ENCODE measurements at regions of chr3 and their contacts with region 1.

Region 1: DNA sequence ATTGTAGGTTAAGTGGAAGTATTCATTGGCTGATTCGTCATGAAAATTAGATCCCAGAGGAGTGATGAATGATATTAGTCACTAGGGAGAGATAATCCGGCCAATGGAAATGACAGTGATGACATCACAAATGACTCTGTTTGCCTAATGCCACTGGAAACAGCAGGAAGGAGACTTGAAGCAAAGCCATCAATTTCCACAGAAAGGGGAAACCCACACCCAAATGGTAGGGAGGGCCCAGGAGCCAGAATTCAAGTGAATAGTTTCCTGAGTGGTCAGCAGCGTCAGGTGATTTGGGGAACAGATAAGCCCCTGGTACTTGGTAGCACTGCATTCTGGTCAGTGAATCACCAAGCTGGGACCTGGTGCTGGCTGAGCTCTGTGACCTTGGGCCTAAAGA is 3.3 kb upstream of the ADAMTS9 start:
- DNase-seq: peak in 2 of 3 donors; percentile 39 to 44
- ATAC-seq: peak in 1 of 2 donors; percentile 64
- H3K4me3 ChIP-seq: no peak overlapping the region
- H3K27ac ChIP-seq: no peak overlapping the region
- H3K4me1 ChIP-seq: peaks cover 8% of the 10 kb centered on the region
- H3K27me3 ChIP-seq: no peaks in the 10 kb centered on the region

Region 2: GRCh38 chr3:64606191-64606590 is 84.9 kb before region 1 on chr3:
- intact Hi-C with region 1: no loop called
- DNase-seq: no peak
- ATAC-seq: no peak
- H3K4me3 ChIP-seq: no peak overlapping the region
- H3K27ac ChIP-seq: no peak overlapping the region
- H3K4me1 ChIP-seq: no peaks in the 10 kb centered on the region
- H3K27me3 ChIP-seq: no peaks in the 10 kb centered on the region

Region 3: GRCh38 chr3:64890006-64890405 is 199.0 kb after region 1 on chr3:
- intact Hi-C with region 1: loop called in 1 of 4 experiments (anchors 10 kb)
- DNase-seq: peak; percentile 74 to 80 (median 76)
- ATAC-seq: peak; percentile 56 to 91
- H3K4me3 ChIP-seq: no peak overlapping the region
- H3K27ac ChIP-seq: no peak overlapping the region
- H3K4me1 ChIP-seq: peaks cover 3% of the 10 kb centered on the region
- H3K27me3 ChIP-seq: no peaks in the 10 kb centered on the region

Region 4: DNA sequence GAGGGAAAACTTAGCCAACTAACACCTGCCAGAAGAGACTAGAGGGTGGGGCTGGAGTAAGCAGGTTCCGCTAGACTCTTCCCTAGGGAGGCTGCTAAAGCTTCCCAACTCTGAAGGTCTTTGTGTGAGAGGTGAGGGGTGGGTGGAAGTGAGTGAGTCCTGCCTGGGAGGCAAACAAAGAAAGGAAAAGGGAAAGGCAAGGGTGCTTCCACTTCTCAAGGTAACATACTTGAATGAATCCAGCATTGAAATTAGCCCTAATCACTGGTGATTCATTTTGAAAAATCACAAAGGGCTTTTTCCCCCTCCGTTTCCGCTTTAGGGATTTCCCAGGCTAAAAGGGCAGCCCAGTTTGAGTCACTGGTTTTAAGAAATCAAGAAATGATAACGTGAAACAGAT is 217.2 kb after region 1 on chr3:
- intact Hi-C with region 1: loop called in 2 of 4 experiments (anchors 10 kb)
- DNase-seq: peak in 1 of 3 donors; percentile 22
- ATAC-seq: peak; percentile 56 to 95
- H3K4me3 ChIP-seq: no peak overlapping the region
- H3K27ac ChIP-seq: no peak overlapping the region
- H3K4me1 ChIP-seq: peaks cover 12% of the 10 kb centered on the region
- H3K27me3 ChIP-seq: no peaks in the 10 kb centered on the region

Region 5: GRCh38 chr3:65268426-65268825 is 577.4 kb after region 1 on chr3:
- intact Hi-C with region 1: no loop called
- DNase-seq: no peak
- ATAC-seq: no peak
- H3K4me3 ChIP-seq: no peak overlapping the region
- H3K27ac ChIP-seq: no peak overlapping the region
- H3K4me1 ChIP-seq: no peaks in the 10 kb centered on the region
- H3K27me3 ChIP-seq: no peaks in the 10 kb centered on the region